ENCODE measurements at regions of chr15 and their contacts with region 1.

Region 1: DNA sequence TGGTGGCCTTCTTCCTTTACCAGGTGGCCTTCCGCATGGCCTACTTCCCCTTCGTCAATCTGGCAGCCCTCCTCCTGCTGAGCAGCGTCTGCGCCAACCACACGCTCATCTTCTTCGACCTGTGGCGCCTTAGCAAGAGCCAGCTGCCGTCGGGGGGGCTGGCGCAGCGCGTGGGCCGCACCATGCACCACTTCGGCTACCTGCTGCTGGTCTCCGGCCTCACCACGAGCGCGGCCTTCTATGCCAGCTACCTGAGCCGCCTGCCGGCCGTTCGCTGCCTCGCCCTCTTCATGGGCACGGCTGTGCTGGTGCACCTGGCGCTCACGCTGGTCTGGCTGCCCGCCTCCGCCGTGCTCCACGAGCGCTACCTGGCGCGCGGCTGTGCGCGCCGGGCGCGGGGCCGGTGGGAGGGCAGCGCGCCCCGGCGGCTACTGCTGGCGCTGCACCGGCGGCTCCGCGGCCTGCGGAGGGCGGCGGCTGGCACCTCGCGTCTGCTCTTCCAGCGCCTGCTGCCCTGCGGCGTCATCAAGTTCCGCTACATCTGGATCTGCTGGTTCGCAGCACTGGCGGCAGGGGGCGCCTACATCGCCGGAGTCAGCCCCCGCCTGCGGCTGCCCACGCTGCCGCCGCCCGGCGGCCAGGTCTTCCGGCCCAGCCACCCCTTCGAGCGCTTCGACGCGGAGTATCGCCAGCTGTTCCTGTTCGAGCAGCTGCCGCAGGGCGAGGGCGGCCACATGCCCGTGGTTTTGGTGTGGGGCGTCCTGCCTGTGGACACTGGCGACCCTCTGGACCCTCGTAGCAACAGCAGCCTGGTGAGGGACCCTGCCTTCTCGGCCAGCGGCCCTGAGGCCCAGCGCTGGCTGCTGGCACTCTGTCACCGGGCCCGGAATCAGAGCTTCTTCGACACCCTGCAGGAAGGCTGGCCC is 9.9 kb downstream of the DISP2 start:
- DNase-seq: peak; percentile 81 to 92 (median 87)
- H3K4me3 ChIP-seq: peak overlapping the region; percentile 66
- H3K4me3 Mint-ChIP-seq: peak overlapping the region; percentile 77 to 90 (median 82)
- H3K27ac ChIP-seq: no peak overlapping the region
- H3K27ac Mint-ChIP-seq: peak overlapping the region; percentile 4 to 97 (median 84)
- H3K4me1 ChIP-seq: peaks cover 29% of the 10 kb centered on the region
- H3K4me1 Mint-ChIP-seq: peaks cover 23 to 40% (median 31%) of the 10 kb centered on the region in 3 donors
- H3K27me3 ChIP-seq: no peaks in the 10 kb centered on the region
- H3K27me3 Mint-ChIP-seq: peaks cover 0 to 1% of the 10 kb centered on the region in 2 donors

Region 2: GRCh38 chr15:40382580-40383456 is 14.9 kb after region 1 on chr15 and contains the start of gene KNSTRN:
- CTCF ChIA-PET with region 1: interaction called, 37 read pairs
- POLR2A ChIA-PET with region 1: interaction called, 3 read pairs
- DNase-seq: peak; percentile 84 to 94 (median 87)
- H3K4me3 ChIP-seq: peak within 1 kb of the TSS; percentile 88
- H3K4me3 Mint-ChIP-seq: peak within 1 kb of the TSS; percentile 90 to 99 (median 97)
- H3K27ac ChIP-seq: peak within 1 kb of the TSS; percentile 62
- H3K27ac Mint-ChIP-seq: peak within 1 kb of the TSS in 7 of 8 donors; percentile 15 to 98 (median 92)
- H3K4me1 ChIP-seq: peaks cover 13% of the 10 kb centered on the region
- H3K4me1 Mint-ChIP-seq: peaks cover 14 to 27% (median 26%) of the 10 kb centered on the region in 3 donors
- H3K27me3 ChIP-seq: no peaks in the 10 kb centered on the region
- H3K27me3 Mint-ChIP-seq: no peaks in the 10 kb centered on the region
- total RNA-seq, gene KNSTRN: 42.8 to 49.9 TPM

Region 3: DNA sequence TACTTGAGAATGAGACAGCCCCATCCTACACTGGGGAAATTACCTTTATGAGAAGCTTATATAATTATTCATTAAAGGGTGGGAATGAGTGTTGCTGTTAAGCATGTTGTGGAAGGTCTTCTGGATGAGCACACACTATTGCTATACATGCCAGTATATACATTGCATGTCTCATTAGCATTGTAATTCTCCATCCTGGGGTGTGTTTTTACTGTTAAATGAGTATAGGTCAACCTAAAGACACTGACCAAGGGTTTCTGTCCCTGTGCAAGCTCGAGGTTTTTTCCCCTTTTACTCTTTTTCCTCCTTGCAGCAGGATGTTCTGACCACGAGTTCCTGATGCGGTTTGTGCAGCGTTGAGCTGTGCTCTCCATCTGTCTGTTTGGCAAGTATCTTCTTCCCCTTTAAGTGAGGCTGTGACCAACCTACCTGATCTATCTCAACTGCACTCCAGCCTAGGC is 30.5 kb after region 1 on chr15:
- CTCF ChIA-PET with region 1: interaction called, 24 read pairs
- POLR2A ChIA-PET with region 1: interaction called, 9 read pairs
- DNase-seq: no peak
- H3K4me3 ChIP-seq: no peak overlapping the region
- H3K4me3 Mint-ChIP-seq: peak overlapping the region in 6 of 7 donors; percentile 36 to 70 (median 66)
- H3K27ac ChIP-seq: no peak overlapping the region
- H3K27ac Mint-ChIP-seq: peak overlapping the region in 6 of 8 donors; percentile 42 to 80 (median 68)
- H3K4me1 ChIP-seq: peaks cover 11% of the 10 kb centered on the region
- H3K4me1 Mint-ChIP-seq: peaks cover 14 to 25% (median 20%) of the 10 kb centered on the region in 3 donors
- H3K27me3 ChIP-seq: no peaks in the 10 kb centered on the region
- H3K27me3 Mint-ChIP-seq: no peaks in the 10 kb centered on the region

Region 4: GRCh38 chr15:40405501-40406381 is 37.8 kb after region 1 on chr15 and contains the start of gene IVD:
- CTCF ChIA-PET with region 1: interaction called, 24 read pairs
- POLR2A ChIA-PET with region 1: interaction called, 3 read pairs
- DNase-seq: peak; percentile 87 to 93 (median 88)
- H3K4me3 ChIP-seq: peak within 1 kb of the TSS; percentile 85
- H3K4me3 Mint-ChIP-seq: peak within 1 kb of the TSS; percentile 86 to 96 (median 91)
- H3K27ac ChIP-seq: peak within 1 kb of the TSS; percentile 57
- H3K27ac Mint-ChIP-seq: peak within 1 kb of the TSS; percentile 68 to 93 (median 88)
- H3K4me1 ChIP-seq: peaks cover 24% of the 10 kb centered on the region
- H3K4me1 Mint-ChIP-seq: peaks cover 31 to 54% (median 45%) of the 10 kb centered on the region in 3 donors
- H3K27me3 ChIP-seq: no peaks in the 10 kb centered on the region
- H3K27me3 Mint-ChIP-seq: no peaks in the 10 kb centered on the region
- total RNA-seq, gene IVD: 68.5 to 80.1 TPM

Region 5: DNA sequence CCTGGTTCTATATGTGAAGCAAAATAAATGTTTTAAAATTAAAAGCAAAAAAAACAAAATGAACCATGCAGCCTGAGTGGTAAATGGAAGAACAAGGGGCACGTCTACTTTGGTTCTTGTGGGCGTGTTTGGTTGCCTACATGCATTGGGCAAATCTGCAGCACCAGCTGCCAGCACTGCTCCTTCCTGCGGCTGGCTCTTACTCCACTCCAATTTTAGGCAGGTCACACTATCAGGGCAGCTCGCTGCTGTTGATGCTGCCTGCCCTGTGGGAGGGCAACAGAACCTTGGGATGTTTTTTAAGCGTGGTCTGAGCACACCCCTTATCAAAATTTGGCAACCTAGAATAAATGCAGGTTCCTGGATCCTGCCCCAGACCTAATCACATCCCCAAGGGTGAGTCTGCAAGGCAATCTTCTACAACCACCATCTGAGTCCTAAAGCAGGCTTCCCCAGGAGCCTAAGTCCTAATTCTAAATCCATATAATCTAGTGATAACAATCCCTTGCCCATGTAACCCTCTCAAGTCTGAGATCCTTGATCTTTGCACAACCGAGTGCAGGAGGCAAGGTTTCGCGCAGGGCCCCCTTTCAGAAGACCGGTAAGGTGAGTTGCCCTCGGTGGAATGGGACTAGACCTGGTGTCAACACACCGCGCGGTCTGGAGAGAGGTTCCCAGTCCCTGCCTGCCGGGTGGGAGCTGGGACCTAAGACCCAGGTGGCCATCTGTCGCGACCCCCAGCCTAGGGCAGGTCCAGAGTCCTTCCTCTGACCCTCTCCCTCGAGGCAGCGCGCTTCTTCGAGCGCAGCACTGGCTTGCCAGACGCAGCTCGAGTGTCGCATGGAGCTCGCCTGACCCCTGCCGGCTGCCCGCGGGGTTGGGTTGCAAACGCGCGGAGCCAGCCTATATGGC is 53.6 kb after region 1 on chr15:
- CTCF ChIA-PET with region 1: interaction called, 15 read pairs
- POLR2A ChIA-PET with region 1: no interaction called
- DNase-seq: peak; percentile 66 to 83 (median 70)
- H3K4me3 ChIP-seq: no peak overlapping the region
- H3K4me3 Mint-ChIP-seq: peak overlapping the region in 2 of 7 donors; percentile 5 to 16
- H3K27ac ChIP-seq: no peak overlapping the region
- H3K27ac Mint-ChIP-seq: peak overlapping the region in 3 of 8 donors; percentile 29 to 68 (median 58)
- H3K4me1 ChIP-seq: peaks cover 4% of the 10 kb centered on the region
- H3K4me1 Mint-ChIP-seq: peaks cover 6 to 10% (median 6%) of the 10 kb centered on the region in 3 donors
- H3K27me3 ChIP-seq: no peaks in the 10 kb centered on the region
- H3K27me3 Mint-ChIP-seq: no peaks in the 10 kb centered on the region